ENCODE measurements at regions of chr9 and their contacts with region 1.

Region 1: GRCh38 chr9:4984621-4985385 is at the start of gene JAK2:
- DNase-seq: peak; percentile 96
- H3K4me3 ChIP-seq: peak within 1 kb of the TSS; percentile 64 to 94 (median 84)
- H3K27ac ChIP-seq: peak within 1 kb of the TSS; percentile 95 to 99 (median 97)
- H3K4me1 ChIP-seq: peaks cover 0 to 45% (median 34%) of the 10 kb centered on the region in 4 donors
- H3K27me3 ChIP-seq: no peaks in the 10 kb centered on the region
- CTCF ChIP-seq: peak in 1 of 4 experiments; percentile 25
- EP300 ChIP-seq: no peak
- POLR2A ChIP-seq: peak; percentile 52 to 62
- total RNA-seq, gene JAK2: 28.5 to 36.8 (median 31.0) TPM

Region 2: DNA sequence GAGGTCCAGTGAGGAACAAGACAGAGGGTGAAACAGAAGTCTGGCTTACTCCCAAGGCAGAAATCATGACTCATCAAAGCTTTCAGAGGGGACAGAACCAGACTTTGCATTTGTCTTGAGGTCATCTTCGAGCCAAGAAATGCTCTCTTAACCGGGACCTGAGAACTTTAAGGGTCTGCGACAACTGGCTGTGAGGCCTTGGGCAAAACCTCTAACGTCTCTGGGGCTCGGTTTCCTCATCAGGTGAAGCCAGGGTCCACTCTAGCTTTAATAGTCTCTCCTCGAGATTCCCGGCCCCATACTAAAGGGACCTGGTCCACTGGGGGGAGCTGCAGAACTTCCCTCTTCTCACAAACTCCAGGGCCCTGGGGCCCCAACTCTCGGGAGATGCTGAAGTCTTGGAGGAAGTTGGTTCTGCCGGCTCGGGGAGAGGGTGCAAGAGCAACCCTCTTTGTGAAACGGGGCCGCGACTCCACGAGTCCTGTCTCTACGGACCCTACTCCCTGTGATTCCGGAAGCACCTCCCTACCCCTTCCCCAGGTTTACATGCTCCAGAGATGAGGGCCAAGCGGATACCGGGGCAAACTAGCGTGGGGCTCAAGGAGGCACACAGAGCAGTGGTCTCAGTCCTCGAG is 687.5 kb before region 1 on chr9:
- intact Hi-C with region 1: loop called (anchors 10 kb)
- DNase-seq: peak; percentile 91
- H3K4me3 ChIP-seq: peak overlapping the region; percentile 61 to 86 (median 66)
- H3K27ac ChIP-seq: peak overlapping the region; percentile 78 to 93 (median 92)
- H3K4me1 ChIP-seq: peaks cover 0 to 27% (median 9%) of the 10 kb centered on the region in 4 donors
- H3K27me3 ChIP-seq: no peaks in the 10 kb centered on the region
- CTCF ChIP-seq: peak in 2 of 4 experiments; percentile 22 to 33
- EP300 ChIP-seq: no peak
- POLR2A ChIP-seq: no peak

Region 3: GRCh38 chr9:4740638-4741364 is 244.0 kb before region 1 on chr9 and contains the start of gene AK3:
- intact Hi-C with region 1: loop called (anchors 2 kb)
- DNase-seq: peak; percentile 95
- H3K4me3 ChIP-seq: peak within 1 kb of the TSS; percentile 61 to 98 (median 79)
- H3K27ac ChIP-seq: peak within 1 kb of the TSS; percentile 88 to 97 (median 95)
- H3K4me1 ChIP-seq: peaks cover 0 to 37% (median 28%) of the 10 kb centered on the region in 4 donors
- H3K27me3 ChIP-seq: no peaks in the 10 kb centered on the region
- CTCF ChIP-seq: peak in 1 of 4 experiments; percentile 13
- EP300 ChIP-seq: no peak
- POLR2A ChIP-seq: peak in 1 of 2 donors; percentile 71
- total RNA-seq, gene AK3: 94.1 to 122 (median 105) TPM

Region 4: GRCh38 chr9:4792572-4793458 is 192.0 kb before region 1 on chr9 and contains the start of gene RCL1:
- intact Hi-C with region 1: loop called (anchors 1 kb)
- DNase-seq: peak; percentile 97
- H3K4me3 ChIP-seq: peak within 1 kb of the TSS; percentile 83 to 98 (median 87)
- H3K27ac ChIP-seq: peak within 1 kb of the TSS; percentile 77 to 90 (median 82)
- H3K4me1 ChIP-seq: peaks cover 0 to 26% (median 12%) of the 10 kb centered on the region in 4 donors
- H3K27me3 ChIP-seq: no peaks in the 10 kb centered on the region
- CTCF ChIP-seq: no peak
- EP300 ChIP-seq: no peak
- POLR2A ChIP-seq: peak; percentile 16 to 59
- total RNA-seq, gene RCL1: 19.7 to 24.1 (median 21.9) TPM

Region 5: DNA sequence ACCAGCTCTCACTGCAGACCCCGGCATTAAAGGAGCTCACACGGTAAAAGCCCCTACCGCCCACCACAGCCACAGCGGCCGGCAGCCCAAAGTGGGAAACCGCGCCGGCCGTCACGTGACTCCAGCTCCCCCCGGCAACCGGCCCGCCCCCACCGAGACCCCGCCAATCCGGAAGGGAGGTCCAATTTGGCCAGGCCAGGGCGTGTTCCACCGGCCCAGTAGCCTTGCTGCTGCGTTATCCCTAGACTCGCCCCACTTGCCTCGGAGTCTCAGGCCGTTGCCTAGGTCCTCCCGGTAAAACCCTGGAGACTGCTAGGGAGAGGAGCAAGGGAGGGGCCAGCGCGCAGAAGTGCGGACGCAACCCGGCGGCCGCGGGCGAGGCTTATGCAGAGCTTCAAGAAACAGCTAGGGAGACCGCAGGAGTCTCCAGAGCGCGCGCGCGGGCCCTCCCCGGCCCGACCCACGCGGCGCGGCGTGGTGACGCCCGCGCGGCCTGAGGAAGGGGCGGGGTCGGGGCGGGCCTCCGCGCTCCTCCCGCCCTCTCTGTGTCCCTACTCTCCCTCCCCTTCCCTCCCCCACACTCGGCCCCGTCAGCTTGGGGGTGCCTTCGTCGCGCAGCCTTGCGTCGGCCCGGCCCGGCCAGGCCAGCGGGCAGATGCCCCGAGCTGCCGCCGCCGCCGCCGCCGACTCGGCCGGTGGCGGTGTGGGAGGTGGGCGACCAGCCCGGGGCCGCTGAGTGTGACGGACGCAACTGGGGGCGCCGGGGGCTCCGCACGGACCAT is 643.9 kb after region 1 on chr9 and contains the start of gene RIC1:
- intact Hi-C with region 1: loop called (anchors 2 kb)
- DNase-seq: peak; percentile 97
- H3K4me3 ChIP-seq: peak within 1 kb of the TSS; percentile 55 to 90 (median 88)
- H3K27ac ChIP-seq: peak within 1 kb of the TSS; percentile 92 to 98 (median 98)
- H3K4me1 ChIP-seq: peaks cover 0 to 62% (median 42%) of the 10 kb centered on the region in 4 donors
- H3K27me3 ChIP-seq: no peaks in the 10 kb centered on the region
- CTCF ChIP-seq: no peak
- EP300 ChIP-seq: no peak
- POLR2A ChIP-seq: peak; percentile 78 to 82
- total RNA-seq, gene RIC1: 29.1 to 44.3 (median 32.3) TPM

Measured in sigmoid colon (tissue), 7 donors.